WTC11 (cell line): ENCODE measurements at regions of chr15 and their contacts with region 1.

Region 1: DNA sequence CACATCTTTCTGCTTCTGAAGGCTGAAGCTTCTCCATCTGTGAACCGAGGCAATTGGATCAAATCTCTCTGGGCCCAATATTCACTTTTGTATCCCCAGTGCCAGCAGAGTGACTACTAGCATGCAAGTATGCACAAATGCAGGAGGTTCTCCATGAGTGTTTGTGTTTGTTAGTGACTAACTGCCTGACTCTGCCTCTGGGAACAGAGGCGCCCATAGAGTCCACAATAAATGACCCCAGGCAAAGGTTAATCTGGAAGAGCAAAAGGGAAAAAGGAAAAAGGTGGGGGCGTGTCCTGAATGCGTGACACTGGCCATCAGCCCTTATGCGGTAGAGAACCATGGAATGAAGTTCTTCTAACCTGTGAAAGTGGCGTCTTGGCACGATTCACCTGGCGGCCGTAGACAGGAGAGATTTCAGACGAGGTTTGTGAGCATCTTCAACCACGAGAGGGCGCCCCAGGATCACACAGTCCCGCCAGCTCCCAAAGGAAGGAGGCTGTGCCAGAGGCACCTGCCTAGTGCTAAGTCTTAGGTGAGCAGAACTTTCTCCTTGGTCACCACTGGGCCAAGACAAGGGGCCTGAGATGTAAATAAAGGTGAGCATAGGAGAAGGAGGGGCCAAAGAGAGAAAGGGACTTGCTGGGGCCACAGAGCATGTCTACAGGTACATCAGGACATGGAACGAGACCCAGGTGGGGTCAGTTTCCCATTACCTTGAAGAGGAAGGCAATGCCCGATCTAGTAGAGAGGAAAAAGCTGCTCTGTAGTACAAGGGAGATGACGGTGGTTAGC is 44.2 kb downstream of the RBPMS2 start:
- DNase-seq: peak; percentile 95
- ATAC-seq: peak; percentile 76
- H3K4me3 Mint-ChIP-seq: no peak overlapping the region
- H3K27ac Mint-ChIP-seq: peak overlapping the region; percentile 94
- H3K4me1 Mint-ChIP-seq: peaks cover 20% of the 10 kb centered on the region
- H3K27me3 Mint-ChIP-seq: no peaks in the 10 kb centered on the region
- CTCF ChIP-seq: peak; percentile 88

Region 2: DNA sequence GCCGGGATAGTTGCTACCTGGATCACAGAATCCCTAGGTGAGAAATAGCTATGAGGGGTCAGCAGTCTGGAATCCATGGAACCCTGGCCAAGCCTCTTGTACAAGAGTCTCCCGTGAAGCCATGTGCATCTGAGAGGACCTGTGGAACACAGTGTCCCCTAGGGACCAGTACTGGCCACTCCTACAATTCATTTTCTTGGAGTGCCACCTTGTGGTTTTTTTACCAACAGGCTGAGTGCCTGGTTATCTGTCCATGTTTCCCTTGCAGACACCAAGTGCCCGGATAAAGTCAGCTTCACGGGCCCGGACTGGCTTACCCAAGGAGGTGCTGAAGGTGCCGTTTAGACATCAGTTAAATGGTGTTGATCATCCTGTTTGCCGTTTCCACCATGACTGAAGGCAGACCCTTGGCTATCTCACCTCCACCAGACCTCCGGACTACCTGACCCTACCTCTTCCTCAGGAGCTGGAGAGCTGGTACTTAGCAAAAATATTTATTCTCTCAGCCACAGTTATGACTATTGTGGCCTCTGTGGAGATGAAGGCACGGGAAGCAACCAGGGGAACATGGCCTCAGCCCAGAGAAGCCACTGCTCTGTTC is 49.7 kb before region 1 on chr15:
- CTCF ChIA-PET with region 1: interaction called, 84 read pairs
- POLR2A ChIA-PET with region 1: no interaction called
- DNase-seq: peak; percentile 56
- ATAC-seq: peak; percentile 86
- H3K4me3 Mint-ChIP-seq: no peak overlapping the region
- H3K27ac Mint-ChIP-seq: no peak overlapping the region
- H3K4me1 Mint-ChIP-seq: peaks cover 19% of the 10 kb centered on the region
- H3K27me3 Mint-ChIP-seq: no peaks in the 10 kb centered on the region
- CTCF ChIP-seq: peak; percentile 27; the same call in 1 of the 2 replicates

Region 3: GRCh38 chr15:64702816-64703646 is 28.2 kb before region 1 on chr15:
- CTCF ChIA-PET with region 1: interaction called, 36 read pairs
- POLR2A ChIA-PET with region 1: interaction called, 7 read pairs
- DNase-seq: peak; percentile 99
- ATAC-seq: peak; percentile 78
- H3K4me3 Mint-ChIP-seq: peak overlapping the region; percentile 82
- H3K27ac Mint-ChIP-seq: peak overlapping the region; percentile 98
- H3K4me1 Mint-ChIP-seq: peaks cover 47% of the 10 kb centered on the region
- H3K27me3 Mint-ChIP-seq: no peaks in the 10 kb centered on the region
- CTCF ChIP-seq: no peak

Region 4: DNA sequence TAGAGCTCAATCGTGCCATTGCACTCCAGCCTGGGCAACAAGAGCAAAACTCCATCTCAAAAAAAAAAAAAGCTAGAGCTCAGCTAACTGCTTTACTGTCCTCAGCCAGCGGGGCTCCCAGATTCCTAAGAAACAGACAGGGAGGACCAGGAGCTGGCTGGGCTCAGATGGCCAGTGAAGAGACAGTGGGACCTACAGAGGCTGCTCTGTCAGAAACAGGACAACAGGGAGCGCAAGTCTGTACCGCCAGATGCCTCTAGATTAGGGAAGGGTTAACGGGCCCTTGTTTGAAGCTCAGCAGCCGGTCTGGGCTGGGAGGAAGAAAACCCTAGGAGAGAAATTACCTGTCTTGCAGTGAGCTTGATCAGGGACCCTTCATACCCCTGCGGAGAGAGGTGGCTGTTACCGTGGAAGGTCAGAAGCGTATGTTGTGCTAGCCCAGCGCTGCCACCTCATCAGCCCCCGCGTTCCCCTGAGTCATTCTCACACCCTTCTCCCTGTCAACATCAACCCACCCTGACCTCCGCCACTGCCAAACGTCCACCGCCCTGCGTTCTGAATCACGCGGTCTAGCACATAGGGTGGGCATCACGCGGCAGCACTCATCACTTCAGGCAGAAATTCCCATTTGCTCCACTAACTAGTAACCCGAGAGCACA is 18.9 kb after region 1 on chr15:
- CTCF ChIA-PET with region 1: interaction called, 21 read pairs
- POLR2A ChIA-PET with region 1: interaction called, 3 read pairs
- DNase-seq: peak; percentile 66
- ATAC-seq: peak; percentile 87
- H3K4me3 Mint-ChIP-seq: no peak overlapping the region
- H3K27ac Mint-ChIP-seq: peak overlapping the region; percentile 98
- H3K4me1 Mint-ChIP-seq: peaks cover 56% of the 10 kb centered on the region
- H3K27me3 Mint-ChIP-seq: no peaks in the 10 kb centered on the region
- CTCF ChIP-seq: no peak

Region 5: DNA sequence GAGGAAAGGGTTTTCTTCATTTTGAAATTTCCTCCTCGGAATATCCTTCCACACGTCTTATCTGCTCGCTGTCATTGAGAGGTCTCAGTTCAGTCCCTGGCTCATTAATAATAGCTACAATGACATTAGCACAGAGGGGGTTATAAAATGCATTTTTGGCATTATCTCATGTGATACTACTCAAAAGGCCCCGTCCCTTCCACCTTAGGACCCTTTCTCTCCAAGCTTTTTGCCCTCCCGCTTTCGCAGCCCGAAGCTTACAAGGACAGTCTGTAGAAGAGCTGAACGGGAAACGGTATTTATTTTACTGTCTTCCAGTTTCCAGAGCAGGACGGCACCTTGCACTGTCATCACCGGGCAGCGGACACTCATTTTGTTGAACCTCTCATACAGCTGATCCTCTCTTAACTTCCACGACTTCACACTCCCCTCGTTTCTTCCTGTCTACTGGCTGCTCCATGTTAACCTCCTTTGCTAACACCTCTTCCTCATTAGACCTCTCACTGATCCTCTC is 104.9 kb after region 1 on chr15:
- CTCF ChIA-PET with region 1: interaction called, 14 read pairs
- POLR2A ChIA-PET with region 1: no interaction called
- DNase-seq: no peak
- ATAC-seq: peak; percentile 3; the same call in 1 of the 2 replicates
- H3K4me3 Mint-ChIP-seq: peak overlapping the region; percentile 37
- H3K27ac Mint-ChIP-seq: peak overlapping the region; percentile 67
- H3K4me1 Mint-ChIP-seq: peaks cover 40% of the 10 kb centered on the region
- H3K27me3 Mint-ChIP-seq: no peaks in the 10 kb centered on the region
- CTCF ChIP-seq: no peak

Region 6: GRCh38 chr15:64921711-64922110 is 190.5 kb after region 1 on chr15:
- CTCF ChIA-PET with region 1: no interaction called
- POLR2A ChIA-PET with region 1: no interaction called
- DNase-seq: no peak
- ATAC-seq: no peak
- H3K4me3 Mint-ChIP-seq: no peak overlapping the region
- H3K27ac Mint-ChIP-seq: peak overlapping the region; percentile 37; the same call in 1 of the 2 replicates
- H3K4me1 Mint-ChIP-seq: peaks cover 11% of the 10 kb centered on the region
- H3K27me3 Mint-ChIP-seq: no peaks in the 10 kb centered on the region
- CTCF ChIP-seq: no peak